ENCODE measurements at regions of chr1 and their contacts with region 1.

Region 1: DNA sequence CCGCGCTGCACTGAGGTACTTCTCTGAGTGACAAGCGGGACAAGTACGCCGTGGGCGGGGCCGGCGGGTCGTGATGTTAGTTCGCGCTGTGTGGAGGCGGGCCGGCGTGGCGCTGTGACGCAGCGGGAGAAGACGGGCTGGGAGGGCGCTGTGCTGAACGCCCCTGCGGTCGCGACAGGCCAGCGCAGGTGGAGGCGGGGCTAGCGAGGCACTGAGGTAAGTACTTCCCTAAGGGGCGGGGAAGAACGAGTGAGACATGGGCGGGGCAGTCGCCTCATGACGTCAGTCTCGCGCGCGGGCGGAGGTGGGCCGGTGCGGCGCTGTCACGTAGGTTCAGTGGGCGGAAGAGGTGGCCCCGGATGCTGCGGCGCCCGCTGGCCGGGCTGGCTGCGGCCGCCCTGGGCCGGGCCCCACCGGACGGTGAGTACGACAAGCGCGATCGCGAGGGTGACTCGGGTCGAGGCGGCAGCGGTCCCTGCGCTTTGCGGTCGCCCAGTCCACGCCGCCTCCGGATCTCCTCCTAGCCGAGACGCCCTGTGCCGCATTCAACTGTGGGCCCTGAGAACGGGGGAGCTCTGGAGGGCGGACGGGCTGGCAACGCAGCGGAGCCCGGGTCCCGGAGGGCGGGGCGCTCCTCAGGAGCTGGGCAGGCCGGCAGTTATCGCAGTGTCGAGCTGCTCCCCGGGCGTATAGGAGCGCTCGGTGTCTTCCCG is at the start of gene GUK1:
- DNase-seq: peak; percentile 100
- ATAC-seq: peak; percentile 94
- total RNA-seq, gene GUK1: 143 TPM

Region 2: GRCh38 chr1:228165372-228166169 is 25.5 kb after region 1 on chr1 and contains the start of gene IBA57:
- intact Hi-C with region 1: loop called (anchors 2 kb)
- DNase-seq: peak; percentile 100
- ATAC-seq: peak; percentile 92
- total RNA-seq, gene IBA57: 14.8 TPM

Region 3: GRCh38 chr1:228212966-228213844 is 73.1 kb after region 1 on chr1:
- intact Hi-C with region 1: no loop called
- DNase-seq: peak; percentile 90
- ATAC-seq: peak; percentile 58

Measured in Right ventricle myocardium superior (tissue), 1 donor.